Heart right ventricle (tissue), 16 donors: ENCODE measurements at regions of chr5 and their contacts with region 1.

Region 1: GRCh38 chr5:97044052-97044451 is 98.4 kb downstream of the LIX1 start:
- DNase-seq: peak; percentile 10 to 16
- ATAC-seq: peak; percentile 61 to 87 (median 82)
- H3K4me3 ChIP-seq: no peak overlapping the region
- H3K27ac ChIP-seq: no peak overlapping the region
- H3K4me1 ChIP-seq: peaks cover 0 to 8% (median 0%) of the 10 kb centered on the region in 9 donors
- H3K27me3 ChIP-seq: no peaks in the 10 kb centered on the region
- CTCF ChIP-seq: peak; percentile 8 to 65 (median 51)

Region 2: GRCh38 chr5:97131139-97131710 is 87.2 kb after region 1 on chr5:
- intact Hi-C with region 1: loop called in 2 of 10 experiments (anchors 5 to 10 kb)
- DNase-seq: no peak
- ATAC-seq: no peak
- H3K4me3 ChIP-seq: no peak overlapping the region
- H3K27ac ChIP-seq: no peak overlapping the region
- H3K4me1 ChIP-seq: peaks cover 0 to 25% (median 8%) of the 10 kb centered on the region in 9 donors
- H3K27me3 ChIP-seq: no peaks in the 10 kb centered on the region
- CTCF ChIP-seq: no peak